IMR-90 (cell line): ENCODE measurements at regions of chr16 and their contacts with region 1.

Region 1: DNA sequence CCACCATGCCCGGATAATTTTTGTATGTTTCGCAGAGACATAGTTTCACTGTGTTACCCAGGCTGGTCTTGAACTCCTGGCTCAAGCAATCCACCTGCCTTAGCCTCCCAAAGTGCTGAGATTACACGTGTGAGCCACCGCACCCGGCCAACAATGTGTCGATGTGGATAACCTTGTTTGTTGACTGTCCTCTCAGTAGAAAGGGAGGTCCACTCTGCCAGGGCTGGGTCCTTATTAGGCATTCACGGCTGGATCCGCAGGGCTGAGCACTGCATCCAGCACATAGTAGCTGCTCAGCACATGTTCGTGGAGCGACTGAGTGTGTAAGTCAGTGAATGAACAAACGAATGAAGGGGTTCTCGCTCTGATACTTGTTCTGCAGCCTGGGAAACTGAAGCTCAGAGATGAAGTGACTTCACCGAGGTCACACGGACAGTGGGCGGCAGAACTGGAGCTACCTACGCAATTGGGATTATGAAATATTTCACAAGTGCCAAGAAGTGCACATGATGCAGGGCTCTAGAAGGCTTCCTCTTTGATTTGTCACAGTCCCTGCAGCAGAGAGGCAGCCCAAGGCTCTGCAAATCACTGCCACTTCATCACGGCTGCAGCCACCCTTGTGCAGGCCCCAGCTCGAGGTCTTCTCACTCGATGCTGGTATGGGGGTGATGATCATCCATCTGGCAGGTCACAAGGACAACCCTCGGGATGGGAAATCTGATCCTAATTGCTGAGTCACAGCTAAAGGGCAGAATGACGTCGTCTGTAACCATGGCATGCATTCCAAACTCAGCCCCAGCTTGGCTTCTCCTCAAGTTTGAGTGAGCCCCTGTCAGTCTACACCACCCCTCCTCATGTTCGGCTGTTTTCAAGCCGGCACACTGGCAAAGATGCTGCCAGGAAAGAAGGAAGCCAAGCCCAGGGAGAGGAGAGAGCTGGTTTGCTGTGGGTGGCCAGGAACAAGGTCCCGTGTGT is 28.0 kb upstream of the SNN start:
- DNase-seq: peak; percentile 100
- ATAC-seq: peak; percentile 92
- H3K4me3 ChIP-seq: no peak overlapping the region
- H3K27ac ChIP-seq: peak overlapping the region; percentile 84
- H3K4me1 ChIP-seq: peaks cover 13% of the 10 kb centered on the region
- H3K27me3 ChIP-seq: no peaks in the 10 kb centered on the region
- CTCF ChIP-seq: no peak
- POLR2A ChIP-seq: peak; percentile 80
- RAD21 ChIP-seq: peak; percentile 32; the same call in 1 of the 2 replicates

Region 2: DNA sequence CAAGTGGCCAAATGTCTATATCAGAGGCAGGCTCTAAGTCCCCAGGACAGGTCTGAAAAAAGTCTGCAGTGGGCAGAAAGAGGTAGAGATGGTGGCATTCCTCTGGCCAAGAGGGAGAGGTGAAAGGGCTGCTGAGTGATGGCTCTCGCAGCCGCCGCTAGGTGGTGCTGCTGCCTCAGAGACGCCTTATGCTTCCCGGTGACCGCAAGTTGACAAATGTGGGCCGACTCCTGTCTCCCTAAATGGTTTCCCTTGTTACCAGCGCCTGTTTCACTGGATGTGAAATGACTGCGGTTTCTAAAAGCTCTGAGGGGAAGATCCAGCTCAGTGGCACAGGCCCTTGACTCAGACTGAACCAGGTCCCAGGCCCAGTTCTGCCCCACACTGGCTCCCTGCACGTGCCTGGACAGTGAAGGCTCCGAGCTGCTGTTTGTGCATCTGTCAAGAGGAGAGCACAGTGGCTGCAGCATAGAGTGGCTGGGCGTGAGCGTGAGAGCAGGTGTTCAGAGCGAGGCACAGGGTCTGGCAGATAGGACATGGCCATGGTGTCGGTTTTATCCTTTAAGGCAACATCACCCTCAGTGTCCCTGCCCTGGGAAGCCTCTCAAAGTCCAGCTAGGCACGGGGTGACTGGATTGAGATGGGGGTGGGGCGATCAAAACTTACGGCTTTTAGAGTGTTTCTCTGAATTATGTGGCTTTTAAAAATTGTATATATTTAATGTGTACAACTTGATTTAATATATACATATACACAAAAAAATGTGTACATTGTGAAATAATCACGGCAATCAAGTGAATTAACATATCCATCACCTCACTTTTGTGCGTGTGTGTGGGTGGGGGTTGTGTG is 675.9 kb before region 1 on chr16:
- CTCF ChIA-PET with region 1: no interaction called
- POLR2A ChIA-PET with region 1: no interaction called
- dilution Hi-C with region 1: no loop called
- in situ Hi-C with region 1: loop called (anchors 10 kb)
- intact Hi-C with region 1: loop called (anchors 10 kb)
- DNase-seq: peak; percentile 86
- ATAC-seq: peak; percentile 85
- H3K4me3 ChIP-seq: no peak overlapping the region
- H3K27ac ChIP-seq: peak overlapping the region; percentile 8; the same call in 1 of the 2 replicates
- H3K4me1 ChIP-seq: peaks cover 20% of the 10 kb centered on the region
- H3K27me3 ChIP-seq: no peaks in the 10 kb centered on the region
- CTCF ChIP-seq: peak; percentile 98
- POLR2A ChIP-seq: peak; percentile 35; the same call in 1 of the 2 replicates
- RAD21 ChIP-seq: peak; percentile 98

Region 3: GRCh38 chr16:11530171-11530940 is 109.9 kb before region 1 on chr16:
- CTCF ChIA-PET with region 1: interaction called, 18 read pairs
- POLR2A ChIA-PET with region 1: interaction called, 3 read pairs
- dilution Hi-C with region 1: no loop called
- in situ Hi-C with region 1: no loop called
- intact Hi-C with region 1: loop called (anchors 1 kb)
- DNase-seq: peak; percentile 22
- ATAC-seq: no peak
- H3K4me3 ChIP-seq: no peak overlapping the region
- H3K27ac ChIP-seq: no peak overlapping the region
- H3K4me1 ChIP-seq: peaks cover 5% of the 10 kb centered on the region; the same call in 1 of the 2 replicates
- H3K27me3 ChIP-seq: peaks cover 10% of the 10 kb centered on the region
- CTCF ChIP-seq: no peak
- POLR2A ChIP-seq: no peak
- RAD21 ChIP-seq: no peak

Region 4: DNA sequence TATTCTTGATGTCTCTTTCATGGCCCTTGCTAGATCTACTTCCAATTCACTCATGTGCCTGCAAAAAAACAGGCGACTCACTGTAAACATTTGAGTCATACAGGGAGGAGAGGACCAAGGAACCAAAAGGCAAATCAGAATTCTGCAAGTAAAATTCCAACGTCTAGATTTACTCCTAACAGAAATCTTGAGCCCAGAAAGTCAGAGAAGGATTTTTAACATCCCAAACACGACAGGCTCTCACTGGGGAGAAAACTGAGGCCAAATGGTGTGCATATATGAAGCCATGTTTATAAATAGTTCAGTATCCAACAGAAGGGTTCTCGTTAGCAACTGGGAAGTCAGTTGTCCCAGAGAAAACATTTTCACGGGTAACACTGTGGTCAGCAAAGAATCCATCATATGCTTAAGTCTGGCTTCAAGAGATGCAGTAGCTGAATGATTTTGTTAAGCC is 93.6 kb before region 1 on chr16:
- CTCF ChIA-PET with region 1: no interaction called
- POLR2A ChIA-PET with region 1: no interaction called
- dilution Hi-C with region 1: no loop called
- in situ Hi-C with region 1: no loop called
- intact Hi-C with region 1: loop called (anchors 5 kb)
- DNase-seq: peak; percentile 85
- ATAC-seq: peak; percentile 92
- H3K4me3 ChIP-seq: no peak overlapping the region
- H3K27ac ChIP-seq: peak overlapping the region; percentile 59; the same call in 1 of the 2 replicates
- H3K4me1 ChIP-seq: peaks cover 8% of the 10 kb centered on the region
- H3K27me3 ChIP-seq: no peaks in the 10 kb centered on the region
- CTCF ChIP-seq: no peak
- POLR2A ChIP-seq: no peak
- RAD21 ChIP-seq: no peak

Region 5: GRCh38 chr16:11585460-11586377 is 54.5 kb before region 1 on chr16:
- CTCF ChIA-PET with region 1: interaction called, 3 read pairs
- POLR2A ChIA-PET with region 1: no interaction called
- dilution Hi-C with region 1: no loop called
- in situ Hi-C with region 1: no loop called
- intact Hi-C with region 1: loop called (anchors 2 kb)
- DNase-seq: peak; percentile 33
- ATAC-seq: peak; percentile 15; the same call in 1 of the 2 replicates
- H3K4me3 ChIP-seq: peak overlapping the region; percentile 93
- H3K27ac ChIP-seq: peak overlapping the region; percentile 63
- H3K4me1 ChIP-seq: peaks cover 16% of the 10 kb centered on the region
- H3K27me3 ChIP-seq: no peaks in the 10 kb centered on the region
- CTCF ChIP-seq: no peak
- POLR2A ChIP-seq: no peak
- RAD21 ChIP-seq: no peak

Region 6: DNA sequence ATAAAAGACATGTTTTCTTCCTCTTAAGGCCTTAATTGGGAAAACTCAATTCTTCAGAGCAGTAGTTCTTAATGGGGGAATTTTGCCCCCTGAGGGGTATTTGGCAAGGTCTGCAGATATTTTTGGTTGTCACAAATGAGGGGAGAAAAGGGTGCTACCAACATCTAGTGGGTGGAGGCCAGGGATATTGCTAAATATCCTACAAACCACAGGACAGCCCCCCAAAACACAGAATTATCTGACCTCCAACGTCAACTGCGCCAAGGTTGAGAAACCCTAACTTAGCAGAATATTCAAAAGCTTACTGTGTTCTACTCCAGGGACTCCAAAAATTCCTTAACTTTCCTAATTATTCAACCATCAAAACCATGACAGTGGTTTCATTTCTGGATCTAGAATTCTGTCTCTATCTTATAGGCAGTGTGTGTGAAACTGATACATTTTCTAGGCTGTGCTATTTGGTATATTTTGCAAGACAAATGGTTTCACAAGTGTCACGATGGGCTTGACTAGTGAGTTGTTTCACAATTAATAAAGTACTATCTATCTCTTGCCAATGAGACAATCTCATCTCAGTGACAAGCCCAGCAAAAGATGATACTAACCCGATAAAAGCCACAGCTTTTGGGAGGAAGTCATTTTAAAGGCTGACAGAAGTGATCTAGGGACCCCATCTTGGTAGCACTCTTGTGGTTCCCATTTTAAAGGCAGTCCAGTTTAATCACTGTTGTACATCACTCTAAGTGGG is 87.8 kb after region 1 on chr16:
- CTCF ChIA-PET with region 1: interaction called, 4 read pairs
- POLR2A ChIA-PET with region 1: no interaction called
- dilution Hi-C with region 1: no loop called
- in situ Hi-C with region 1: no loop called
- intact Hi-C with region 1: loop called (anchors 5 kb)
- DNase-seq: no peak
- ATAC-seq: no peak
- H3K4me3 ChIP-seq: no peak overlapping the region
- H3K27ac ChIP-seq: no peak overlapping the region
- H3K4me1 ChIP-seq: peaks cover 5% of the 10 kb centered on the region
- H3K27me3 ChIP-seq: no peaks in the 10 kb centered on the region
- CTCF ChIP-seq: no peak
- POLR2A ChIP-seq: no peak
- RAD21 ChIP-seq: no peak

Region 7: GRCh38 chr16:11915644-11916523 is 275.7 kb after region 1 on chr16 and contains the start of gene GSPT1:
- CTCF ChIA-PET with region 1: no interaction called
- POLR2A ChIA-PET with region 1: no interaction called
- dilution Hi-C with region 1: no loop called
- in situ Hi-C with region 1: no loop called
- intact Hi-C with region 1: no loop called
- DNase-seq: peak; percentile 97
- ATAC-seq: peak; percentile 96
- H3K4me3 ChIP-seq: peak within 1 kb of the TSS; percentile 94
- H3K27ac ChIP-seq: peak within 1 kb of the TSS; percentile 87
- H3K4me1 ChIP-seq: peaks cover 8% of the 10 kb centered on the region
- H3K27me3 ChIP-seq: peaks cover 7% of the 10 kb centered on the region
- CTCF ChIP-seq: no peak
- POLR2A ChIP-seq: peak; percentile 85
- RAD21 ChIP-seq: no peak
- total RNA-seq, gene GSPT1: 84.8 and 121 TPM in 2 replicates

Region 8: GRCh38 chr16:12043953-12044352 is 403.7 kb after region 1 on chr16:
- CTCF ChIA-PET with region 1: no interaction called
- POLR2A ChIA-PET with region 1: no interaction called
- dilution Hi-C with region 1: no loop called
- in situ Hi-C with region 1: no loop called
- intact Hi-C with region 1: no loop called
- DNase-seq: no peak
- ATAC-seq: no peak
- H3K4me3 ChIP-seq: no peak overlapping the region
- H3K27ac ChIP-seq: no peak overlapping the region
- H3K4me1 ChIP-seq: peaks cover 3% of the 10 kb centered on the region
- H3K27me3 ChIP-seq: no peaks in the 10 kb centered on the region
- CTCF ChIP-seq: no peak
- POLR2A ChIP-seq: no peak
- RAD21 ChIP-seq: no peak